ENCODE measurements at regions of chr1 and their contacts with region 1.

Region 1: DNA sequence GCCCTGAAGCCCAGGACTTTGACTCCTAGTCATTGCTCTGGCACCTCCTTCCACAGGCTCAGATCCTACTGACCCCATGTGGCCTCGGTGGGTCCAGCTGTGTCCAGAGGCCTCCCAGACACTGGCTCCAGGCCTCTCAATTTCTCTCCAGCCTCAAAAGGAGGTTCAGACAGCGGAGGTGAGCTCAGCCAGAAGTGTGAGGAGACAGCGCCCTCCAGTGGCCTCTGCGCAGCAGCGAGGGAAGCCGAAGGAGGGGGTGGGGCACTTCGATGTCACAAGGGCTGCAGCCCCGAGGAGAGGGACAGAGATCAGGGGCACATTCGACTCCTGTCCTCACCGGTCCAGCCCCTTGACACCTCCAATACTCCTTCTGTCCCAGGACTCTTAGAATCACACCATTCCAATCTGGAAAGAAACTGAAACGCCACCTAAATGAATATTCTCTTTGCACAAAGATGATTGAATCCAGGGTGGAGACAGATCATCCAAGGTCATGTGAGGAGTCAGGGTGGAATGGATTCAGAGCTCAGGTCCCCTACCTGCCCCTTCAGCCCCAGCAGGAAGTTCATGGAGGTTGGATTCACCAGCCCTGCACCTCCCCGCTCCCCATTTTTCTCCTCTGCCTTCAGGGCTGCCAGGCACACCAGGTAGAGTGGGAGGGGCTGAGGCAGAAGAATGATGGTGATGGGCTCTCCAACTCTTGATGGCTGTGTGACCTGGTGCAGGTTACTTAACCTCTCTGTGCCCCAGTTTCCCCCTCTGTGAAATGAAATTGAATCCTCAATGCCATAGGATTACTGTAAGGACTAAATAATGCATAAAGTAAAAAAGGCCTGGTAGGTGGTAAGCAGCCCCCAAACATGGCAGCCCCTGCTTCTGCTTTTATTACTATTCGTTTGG is 34.8 kb upstream of the ZBTB40 start:
- DNase-seq: peak; percentile 81
- H3K4me3 ChIP-seq: no peak overlapping the region
- H3K27ac ChIP-seq: no peak overlapping the region
- H3K4me1 ChIP-seq: no peaks in the 10 kb centered on the region
- H3K27me3 ChIP-seq: no peaks in the 10 kb centered on the region
- CTCF ChIP-seq: peak; percentile 98

Region 2: DNA sequence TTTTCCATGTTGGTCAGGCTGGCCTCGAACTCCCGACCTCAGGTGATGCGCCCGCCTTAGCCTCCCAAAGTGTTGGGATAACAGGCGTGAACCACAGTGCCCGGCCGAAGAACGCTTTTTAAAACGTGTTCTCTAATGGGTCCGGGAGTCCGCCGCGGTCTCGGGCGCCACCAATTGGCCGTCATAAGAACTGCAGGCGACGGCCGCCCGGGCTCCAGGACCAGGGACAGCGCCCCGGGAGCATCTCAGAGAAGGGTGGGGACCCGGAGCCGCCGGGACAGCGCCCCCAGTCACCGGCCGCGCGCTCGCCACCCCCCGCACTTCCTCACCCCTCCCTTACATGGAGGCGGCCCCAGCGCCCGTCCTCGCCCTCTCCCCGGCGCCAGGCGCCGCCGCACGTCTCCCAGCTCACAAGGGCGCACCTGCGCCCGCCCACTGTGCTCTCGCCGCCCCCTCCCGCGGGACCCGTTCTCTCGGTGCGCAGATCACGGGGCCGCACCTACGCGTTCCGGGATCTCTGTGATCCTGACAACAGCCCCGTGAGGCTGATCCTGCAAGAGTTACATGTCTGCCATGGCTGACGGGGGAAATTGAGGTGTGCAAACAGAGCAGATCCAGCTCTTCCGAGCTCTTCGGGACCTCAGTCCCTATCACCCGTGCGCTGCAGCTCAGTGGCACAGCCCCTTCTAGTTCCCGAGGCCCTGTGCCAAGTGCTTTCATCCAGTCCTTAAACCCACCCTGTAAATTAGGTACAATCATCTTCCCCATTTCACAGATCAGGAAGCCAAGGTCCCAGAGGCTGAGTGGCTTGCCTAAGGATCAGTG is 757.5 kb before region 1 on chr1:
- CTCF ChIA-PET with region 1: no interaction called
- POLR2A ChIA-PET with region 1: no interaction called
- intact Hi-C with region 1: loop called (anchors 5 kb)
- DNase-seq: peak; percentile 75
- H3K4me3 ChIP-seq: peak overlapping the region; percentile 29
- H3K27ac ChIP-seq: no peak overlapping the region
- H3K4me1 ChIP-seq: peaks cover 19% of the 10 kb centered on the region
- H3K27me3 ChIP-seq: no peaks in the 10 kb centered on the region
- CTCF ChIP-seq: peak; percentile 88

Region 3: DNA sequence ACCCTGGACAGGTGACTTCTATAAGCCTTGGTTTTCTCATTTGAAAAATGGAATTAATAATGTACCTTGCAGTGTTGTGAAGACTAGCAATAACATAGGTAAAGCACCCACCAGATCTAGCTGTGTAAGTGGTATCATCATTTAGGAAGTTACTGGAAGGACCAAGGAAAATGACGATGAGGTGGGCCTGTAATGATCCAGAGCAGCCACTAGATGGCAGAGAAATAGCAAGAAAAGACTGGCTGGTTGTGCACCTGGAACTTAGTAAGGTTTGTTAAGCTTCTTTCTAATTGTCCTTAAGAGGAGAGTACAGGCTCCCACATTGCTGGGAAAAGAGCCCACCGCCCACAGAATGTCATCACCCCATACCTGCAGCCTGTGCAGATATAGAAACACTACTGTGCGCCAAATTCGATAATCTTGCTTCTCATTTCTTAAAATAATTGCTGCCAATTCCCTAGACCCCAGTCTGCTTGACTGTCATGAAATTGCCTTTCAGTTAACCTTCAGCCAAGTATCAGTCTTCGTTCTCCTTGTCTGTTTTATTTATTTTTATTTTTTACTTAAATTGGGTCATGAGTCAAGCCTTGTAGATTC is 311.1 kb before region 1 on chr1:
- CTCF ChIA-PET with region 1: interaction called, 6 read pairs
- POLR2A ChIA-PET with region 1: no interaction called
- intact Hi-C with region 1: loop called (anchors 10 kb)
- DNase-seq: peak; percentile 62
- H3K4me3 ChIP-seq: no peak overlapping the region
- H3K27ac ChIP-seq: no peak overlapping the region
- H3K4me1 ChIP-seq: no peaks in the 10 kb centered on the region
- H3K27me3 ChIP-seq: no peaks in the 10 kb centered on the region
- CTCF ChIP-seq: peak; percentile 84

Region 4: GRCh38 chr1:22131875-22132486 is 284.8 kb before region 1 on chr1:
- CTCF ChIA-PET with region 1: no interaction called
- POLR2A ChIA-PET with region 1: no interaction called
- intact Hi-C with region 1: loop called (anchors 2 kb)
- DNase-seq: peak; percentile 41
- H3K4me3 ChIP-seq: no peak overlapping the region
- H3K27ac ChIP-seq: no peak overlapping the region
- H3K4me1 ChIP-seq: no peaks in the 10 kb centered on the region
- H3K27me3 ChIP-seq: no peaks in the 10 kb centered on the region
- CTCF ChIP-seq: peak; percentile 91

Region 5: GRCh38 chr1:22641906-22642636 is 225.3 kb after region 1 on chr1:
- CTCF ChIA-PET with region 1: interaction called, 11 read pairs
- POLR2A ChIA-PET with region 1: no interaction called
- intact Hi-C with region 1: loop called (anchors 1 kb)
- DNase-seq: peak; percentile 76
- H3K4me3 ChIP-seq: no peak overlapping the region
- H3K27ac ChIP-seq: no peak overlapping the region
- H3K4me1 ChIP-seq: no peaks in the 10 kb centered on the region
- H3K27me3 ChIP-seq: no peaks in the 10 kb centered on the region
- CTCF ChIP-seq: peak; percentile 90

Region 6: GRCh38 chr1:22930235-22930912 is 513.6 kb after region 1 on chr1:
- CTCF ChIA-PET with region 1: no interaction called
- POLR2A ChIA-PET with region 1: no interaction called
- intact Hi-C with region 1: loop called (anchors 10 kb)
- DNase-seq: peak; percentile 74
- H3K4me3 ChIP-seq: no peak overlapping the region
- H3K27ac ChIP-seq: no peak overlapping the region
- H3K4me1 ChIP-seq: no peaks in the 10 kb centered on the region
- H3K27me3 ChIP-seq: no peaks in the 10 kb centered on the region
- CTCF ChIP-seq: peak; percentile 83